ENCODE measurements at regions of chr22 and their contacts with region 1.

Region 1: DNA sequence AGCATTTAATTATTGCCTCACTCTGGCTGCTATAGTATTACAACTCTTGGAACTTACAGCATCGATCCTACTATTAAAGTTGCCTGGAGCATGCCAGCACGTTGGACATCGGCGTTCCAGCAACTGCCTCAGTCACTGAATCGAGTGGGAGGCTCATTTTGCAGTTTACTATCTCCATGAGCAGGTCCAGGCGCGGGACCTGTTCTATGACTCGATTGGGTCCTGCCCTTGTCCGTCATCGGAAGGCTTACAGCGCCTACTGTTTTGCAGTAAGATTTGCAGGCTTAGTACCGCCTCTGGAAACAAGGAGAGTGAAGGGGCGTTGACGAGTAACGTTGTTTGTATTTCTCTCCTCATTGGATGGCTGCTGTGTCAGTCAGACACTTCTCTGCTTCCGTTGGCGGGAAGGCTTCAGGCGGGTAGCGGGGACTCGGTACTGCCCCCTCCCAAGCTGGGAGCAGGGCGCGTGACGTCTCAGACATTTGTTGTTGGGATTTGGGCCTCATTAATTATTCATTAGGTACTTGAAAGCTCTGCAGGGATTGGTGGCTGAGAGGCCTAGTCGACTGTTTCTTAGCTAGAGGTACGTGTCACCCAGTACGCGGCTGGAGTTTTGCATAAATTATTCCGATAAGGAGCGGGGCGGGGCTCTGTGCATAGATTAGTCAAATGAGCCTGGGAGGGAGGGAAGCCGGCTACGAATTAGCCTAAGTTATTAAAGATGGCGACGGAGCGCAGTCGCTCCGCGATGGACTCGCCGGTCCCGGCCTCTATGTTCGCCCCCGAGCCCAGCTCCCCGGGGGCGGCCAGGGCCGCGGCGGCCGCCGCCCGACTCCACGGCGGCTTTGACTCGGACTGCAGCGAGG is at the start of gene GTPBP1:
- DNase-seq: peak; percentile 99
- ATAC-seq: peak; percentile 89
- H3K4me3 Mint-ChIP-seq: peak within 1 kb of the TSS; percentile 88
- H3K27ac Mint-ChIP-seq: peak within 1 kb of the TSS; percentile 98
- H3K4me1 Mint-ChIP-seq: peaks cover 48% of the 10 kb centered on the region
- H3K27me3 Mint-ChIP-seq: no peaks in the 10 kb centered on the region
- CTCF ChIP-seq: no peak
- total RNA-seq, gene GTPBP1: 93.3 to 97.6 TPM

Region 2: GRCh38 chr22:38317122-38317994 is 388.1 kb before region 1 on chr22 and contains the start of gene CSNK1E:
- CTCF ChIA-PET with region 1: no interaction called
- POLR2A ChIA-PET with region 1: no interaction called
- intact Hi-C with region 1: no loop called
- DNase-seq: peak; percentile 77
- ATAC-seq: peak; percentile 55
- H3K4me3 Mint-ChIP-seq: peak within 1 kb of the TSS; percentile 92
- H3K27ac Mint-ChIP-seq: peak within 1 kb of the TSS; percentile 91
- H3K4me1 Mint-ChIP-seq: peaks cover 36% of the 10 kb centered on the region
- H3K27me3 Mint-ChIP-seq: no peaks in the 10 kb centered on the region
- CTCF ChIP-seq: no peak
- total RNA-seq, gene CSNK1E: 123 TPM

Region 3: DNA sequence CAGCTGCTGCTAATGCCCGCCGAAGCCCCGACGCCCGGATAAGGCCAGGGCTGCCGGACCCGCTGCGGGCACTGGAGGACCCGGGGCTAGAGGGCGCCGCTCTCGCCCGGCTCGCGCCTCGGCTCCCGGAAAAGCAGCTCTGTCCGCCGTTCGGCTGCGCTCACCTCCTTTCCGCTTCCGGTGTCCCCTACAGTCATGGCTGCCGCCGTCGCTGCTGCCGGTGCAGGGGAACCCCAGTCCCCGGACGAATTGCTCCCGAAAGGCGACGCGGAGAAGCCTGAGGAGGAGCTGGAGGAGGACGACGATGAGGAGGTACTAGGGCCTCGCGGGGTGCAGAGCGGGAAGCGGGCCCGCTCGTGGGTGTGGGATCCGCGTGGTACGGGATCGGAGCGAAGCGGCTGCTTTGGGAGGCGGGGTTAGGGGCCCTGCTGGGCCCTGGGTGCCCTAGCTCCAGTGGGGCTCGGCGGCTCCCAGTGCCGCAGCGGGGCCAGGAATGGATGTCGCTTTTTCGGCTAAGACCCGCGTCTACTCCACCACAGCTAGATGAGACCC is 23.6 kb before region 1 on chr22 and contains the start of gene TOMM22:
- CTCF ChIA-PET with region 1: interaction called, 6 read pairs
- POLR2A ChIA-PET with region 1: interaction called, 62 read pairs
- intact Hi-C with region 1: no loop called
- DNase-seq: peak; percentile 89
- ATAC-seq: peak; percentile 98
- H3K4me3 Mint-ChIP-seq: peak within 1 kb of the TSS; percentile 97
- H3K27ac Mint-ChIP-seq: peak within 1 kb of the TSS; percentile 96
- H3K4me1 Mint-ChIP-seq: peaks cover 26% of the 10 kb centered on the region
- H3K27me3 Mint-ChIP-seq: no peaks in the 10 kb centered on the region
- CTCF ChIP-seq: no peak
- total RNA-seq, gene TOMM22: 155 to 158 TPM

Region 4: DNA sequence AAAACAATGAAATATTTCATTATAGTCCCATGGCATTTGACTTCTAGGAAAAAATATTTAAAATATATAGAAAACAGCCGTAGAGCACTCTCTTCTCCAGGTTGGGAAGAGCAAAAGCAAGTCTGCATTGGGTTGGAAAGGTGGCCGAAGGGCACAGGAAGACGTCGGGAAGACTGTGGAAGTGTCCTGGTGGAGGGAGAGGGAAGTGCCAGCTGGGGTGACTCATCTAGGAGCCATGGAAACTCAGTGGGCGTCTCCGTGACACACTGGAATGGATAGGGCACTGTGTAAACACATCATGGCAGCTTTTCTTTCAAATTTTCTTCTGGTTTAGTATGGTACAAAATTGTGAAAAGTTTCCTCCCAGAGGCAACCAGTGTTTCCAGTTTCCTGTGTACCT is 12.9 kb after region 1 on chr22:
- CTCF ChIA-PET with region 1: no interaction called
- POLR2A ChIA-PET with region 1: interaction called, 905 read pairs
- intact Hi-C with region 1: no loop called
- DNase-seq: no peak
- ATAC-seq: no peak
- H3K4me3 Mint-ChIP-seq: no peak overlapping the region
- H3K27ac Mint-ChIP-seq: no peak overlapping the region
- H3K4me1 Mint-ChIP-seq: peaks cover 12% of the 10 kb centered on the region
- H3K27me3 Mint-ChIP-seq: no peaks in the 10 kb centered on the region
- CTCF ChIP-seq: no peak

Region 5: GRCh38 chr22:38724926-38725571 is 19.6 kb after region 1 on chr22:
- CTCF ChIA-PET with region 1: interaction called, 18 read pairs
- POLR2A ChIA-PET with region 1: interaction called, 905 read pairs
- intact Hi-C with region 1: no loop called
- DNase-seq: peak; percentile 31
- ATAC-seq: peak; percentile 87
- H3K4me3 Mint-ChIP-seq: no peak overlapping the region
- H3K27ac Mint-ChIP-seq: peak overlapping the region; percentile 7
- H3K4me1 Mint-ChIP-seq: no peaks in the 10 kb centered on the region
- H3K27me3 Mint-ChIP-seq: no peaks in the 10 kb centered on the region
- CTCF ChIP-seq: peak; percentile 43

Region 6: DNA sequence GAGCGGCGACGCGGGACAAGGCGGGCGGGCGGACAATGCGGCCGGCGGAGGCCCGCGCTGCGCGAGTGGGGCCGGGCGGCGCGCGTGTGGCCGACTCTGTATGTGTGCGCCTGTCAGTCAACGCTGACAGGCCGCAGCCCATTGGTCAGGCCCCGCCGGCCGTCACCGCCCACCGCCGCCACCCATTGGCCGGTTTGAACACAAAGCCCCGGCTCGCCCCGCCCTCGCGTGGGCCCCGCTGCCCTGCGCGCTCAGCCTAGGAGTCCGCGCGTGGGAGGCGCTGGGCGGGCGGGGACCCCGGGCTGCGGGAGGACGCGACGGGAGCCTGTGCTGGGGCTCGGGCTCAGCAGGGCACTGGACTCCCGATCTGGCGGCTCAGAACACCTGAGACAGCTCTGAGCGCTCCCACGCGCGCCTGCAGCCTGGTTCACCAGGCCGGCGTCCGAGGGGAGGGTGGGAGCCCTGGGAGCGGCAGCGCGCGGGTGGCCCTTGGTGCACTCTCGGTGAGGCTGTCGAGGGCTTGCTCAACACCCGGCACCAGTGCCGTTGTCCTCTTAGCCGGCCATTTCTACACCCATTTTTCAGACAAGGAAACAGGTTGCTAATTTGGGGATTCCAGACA is 50.6 kb after region 1 on chr22 and contains the start of gene SUN2:
- CTCF ChIA-PET with region 1: no interaction called
- POLR2A ChIA-PET with region 1: interaction called, 905 read pairs
- intact Hi-C with region 1: loop called (anchors 10 kb)
- DNase-seq: peak; percentile 95
- ATAC-seq: peak; percentile 73
- H3K4me3 Mint-ChIP-seq: peak within 1 kb of the TSS; percentile 87
- H3K27ac Mint-ChIP-seq: peak within 1 kb of the TSS; percentile 99
- H3K4me1 Mint-ChIP-seq: peaks cover 54% of the 10 kb centered on the region
- H3K27me3 Mint-ChIP-seq: no peaks in the 10 kb centered on the region
- CTCF ChIP-seq: no peak
- total RNA-seq, gene SUN2: 101 to 107 TPM

Region 7: DNA sequence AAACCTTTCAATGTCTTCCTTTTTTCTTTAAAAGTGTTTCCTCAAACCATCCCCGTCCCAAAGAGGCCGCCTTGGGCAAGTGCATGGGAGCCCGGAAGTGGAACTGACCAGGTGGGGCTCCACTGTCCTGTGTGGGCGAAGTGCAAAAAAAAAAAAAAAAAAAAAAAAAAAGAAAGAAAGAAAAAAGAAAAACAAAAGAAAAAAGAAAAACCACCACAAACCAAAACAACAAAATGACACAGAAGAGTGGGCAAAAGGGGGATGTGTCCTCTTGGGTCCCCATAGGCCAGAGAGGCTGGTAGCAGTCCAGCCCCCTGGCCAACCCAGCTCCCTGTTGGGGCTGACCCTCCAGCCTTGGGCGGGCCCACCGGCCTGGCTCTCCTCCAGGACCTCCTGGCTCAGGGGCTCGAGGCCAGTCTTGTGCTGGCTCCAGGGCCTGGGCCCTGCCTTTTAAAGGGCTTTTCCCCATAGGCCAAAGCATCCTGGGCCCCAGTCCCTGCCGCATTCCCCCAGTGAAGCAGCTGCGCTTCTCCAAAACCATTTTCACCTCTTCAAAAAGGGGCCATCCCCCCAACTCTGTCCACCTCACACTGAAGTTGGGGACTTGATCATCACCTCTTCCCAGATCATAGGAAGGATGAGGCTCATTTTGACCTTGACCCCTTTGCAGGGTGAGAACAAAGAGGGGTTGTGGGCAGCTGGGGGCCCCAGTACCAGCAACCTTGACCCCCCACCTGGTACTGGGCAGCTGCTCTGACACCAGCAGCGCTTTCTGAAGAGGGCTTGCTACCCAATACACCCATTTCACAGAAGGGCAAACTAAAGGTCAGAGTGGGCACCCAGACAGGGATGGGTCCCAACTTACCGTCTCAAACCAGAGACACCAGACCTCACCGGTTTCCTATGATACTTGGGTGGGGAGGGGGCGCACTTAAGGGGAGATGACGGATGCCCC is 157.2 kb after region 1 on chr22:
- CTCF ChIA-PET with region 1: no interaction called
- POLR2A ChIA-PET with region 1: no interaction called
- intact Hi-C with region 1: no loop called
- DNase-seq: no peak
- ATAC-seq: no peak
- H3K4me3 Mint-ChIP-seq: no peak overlapping the region
- H3K27ac Mint-ChIP-seq: no peak overlapping the region
- H3K4me1 Mint-ChIP-seq: peaks cover 5% of the 10 kb centered on the region
- H3K27me3 Mint-ChIP-seq: no peaks in the 10 kb centered on the region
- CTCF ChIP-seq: no peak

Region 8: DNA sequence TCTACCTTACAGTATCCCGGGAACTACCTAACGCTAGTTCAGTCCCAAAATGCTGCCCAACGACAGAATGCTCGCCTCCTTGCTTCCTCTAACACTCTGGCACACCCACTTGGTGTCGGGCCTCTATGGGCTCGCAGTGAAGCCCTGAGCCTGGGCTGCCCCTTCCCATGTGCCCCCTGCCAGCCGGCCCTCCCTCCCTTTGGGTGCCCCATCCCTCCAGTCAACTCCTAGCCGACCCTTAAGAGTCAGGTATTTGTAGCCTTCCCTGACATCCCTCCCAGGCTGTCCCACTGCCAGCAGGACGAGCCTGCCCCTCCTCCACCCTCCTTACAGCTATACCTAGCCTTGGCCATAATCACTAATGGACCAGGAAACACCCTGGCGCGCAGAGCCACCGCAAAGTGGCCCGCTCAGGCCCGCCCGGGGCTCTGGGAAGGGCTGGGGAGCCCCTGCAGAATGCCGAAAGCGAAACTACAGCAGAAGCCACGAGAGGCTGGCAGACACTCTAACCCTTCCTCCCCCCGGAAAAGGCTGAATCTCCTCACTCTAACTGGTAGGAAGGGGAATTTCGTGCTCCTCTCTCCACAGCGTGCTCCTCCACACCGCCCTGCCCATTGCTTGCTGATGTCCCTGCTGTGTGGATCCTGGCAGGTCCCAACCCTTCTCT is 438.8 kb after region 1 on chr22:
- CTCF ChIA-PET with region 1: no interaction called
- POLR2A ChIA-PET with region 1: no interaction called
- intact Hi-C with region 1: no loop called
- DNase-seq: peak; percentile 66
- ATAC-seq: peak; percentile 47
- H3K4me3 Mint-ChIP-seq: peak overlapping the region; percentile 73
- H3K27ac Mint-ChIP-seq: peak overlapping the region; percentile 75
- H3K4me1 Mint-ChIP-seq: peaks cover 28% of the 10 kb centered on the region
- H3K27me3 Mint-ChIP-seq: no peaks in the 10 kb centered on the region
- CTCF ChIP-seq: no peak

Measured in activated CD8-positive, alpha-beta T cell treated with anti-CD3 and anti-CD28 coated beads for 36 hours (primary cell).